Naive thymus-derived CD4-positive, alpha-beta T cell (primary cell): ENCODE measurements at regions of chr12 and their contacts with region 1.

Region 1: DNA sequence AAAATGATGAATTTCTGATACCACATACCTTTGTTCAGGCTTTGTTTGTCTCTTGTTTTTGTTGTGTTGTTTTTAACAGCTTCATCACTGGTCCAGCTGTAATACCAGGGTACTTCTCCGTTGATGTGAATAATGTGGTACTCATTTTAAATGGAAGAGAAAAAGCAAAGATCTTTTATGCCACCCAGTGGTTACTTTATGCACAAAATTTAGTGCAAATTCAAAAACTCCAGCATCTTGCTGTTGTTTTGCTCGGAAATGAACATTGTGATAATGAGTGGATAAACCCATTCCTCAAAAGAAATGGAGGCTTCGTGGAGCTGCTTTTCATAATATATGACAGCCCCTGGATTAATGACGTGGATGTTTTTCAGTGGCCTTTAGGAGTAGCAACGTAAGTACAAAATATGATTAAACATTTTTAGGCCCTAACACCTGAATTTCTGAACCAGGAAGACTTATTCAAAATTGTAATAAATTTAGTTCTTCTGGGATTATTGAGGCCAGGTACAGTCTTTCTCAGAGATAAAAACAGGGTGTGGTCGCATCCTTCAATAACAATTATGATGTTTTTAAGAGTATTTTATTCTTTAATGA is 22.4 kb downstream of the RXYLT1 start:
- DNase-seq: peak in 6 of 9 donors; percentile 3 to 34 (median 26)
- ATAC-seq: no peak
- H3K4me3 ChIP-seq: no peak overlapping the region
- H3K4me3 Mint-ChIP-seq: no peak overlapping the region
- H3K27ac ChIP-seq: no peak overlapping the region
- H3K27ac Mint-ChIP-seq: no peak overlapping the region
- H3K4me1 ChIP-seq: no peaks in the 10 kb centered on the region
- H3K4me1 Mint-ChIP-seq: peaks cover 0 to 4% (median 0%) of the 10 kb centered on the region in 7 donors
- H3K27me3 ChIP-seq: no peaks in the 10 kb centered on the region
- H3K27me3 Mint-ChIP-seq: no peaks in the 10 kb centered on the region

Region 2: DNA sequence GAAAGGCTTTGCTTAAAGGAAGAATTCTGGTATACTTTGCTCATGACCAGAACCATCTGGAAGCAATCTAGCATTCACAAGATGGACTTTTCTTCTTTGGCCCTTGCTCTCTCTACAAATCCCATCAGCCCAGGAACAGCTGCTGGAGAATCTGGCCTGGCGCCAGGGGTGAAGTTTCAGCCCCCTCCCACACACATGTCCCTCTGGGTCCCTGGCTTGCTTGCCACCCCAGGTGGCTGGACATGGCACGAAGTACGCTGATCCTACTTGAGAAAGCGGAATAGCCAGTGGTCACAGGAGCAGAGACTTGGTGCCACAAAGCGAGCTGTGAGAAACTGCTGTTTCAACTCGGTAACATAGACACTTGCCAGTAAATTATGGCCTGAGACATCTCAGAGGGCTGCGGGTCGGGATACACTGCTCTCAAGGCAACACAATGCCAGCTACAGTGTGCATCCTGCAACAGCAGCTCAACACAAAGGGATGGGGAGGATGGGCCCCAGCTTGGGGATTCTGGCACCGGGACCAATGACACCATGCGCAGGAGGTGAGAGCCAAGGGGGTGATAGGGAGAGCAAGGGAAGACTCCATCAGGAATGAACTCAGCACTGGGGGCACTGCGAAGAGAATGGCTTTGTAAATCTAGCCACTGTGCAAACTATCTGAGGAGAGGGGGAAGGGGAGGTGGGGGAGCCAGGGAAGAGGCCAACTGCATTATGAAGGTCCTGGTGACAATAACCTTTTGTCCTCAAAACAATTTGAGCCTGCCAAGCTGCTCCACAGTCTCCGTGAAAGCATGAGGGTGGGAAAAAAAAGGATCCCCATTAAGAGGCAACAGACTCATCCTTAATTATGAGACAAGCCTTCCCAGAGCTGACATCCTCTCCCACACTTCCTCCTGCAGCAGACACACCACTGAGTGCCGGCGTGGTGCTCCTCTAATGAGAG is 1087.1 kb before region 1 on chr12:
- CTCF ChIA-PET with region 1: no interaction called
- POLR2A ChIA-PET with region 1: no interaction called
- intact Hi-C with region 1: no loop called
- DNase-seq: no peak
- ATAC-seq: no peak
- H3K4me3 ChIP-seq: no peak overlapping the region
- H3K4me3 Mint-ChIP-seq: no peak overlapping the region
- H3K27ac ChIP-seq: no peak overlapping the region
- H3K27ac Mint-ChIP-seq: peak overlapping the region in 1 of 9 donors; percentile 63
- H3K4me1 ChIP-seq: no peaks in the 10 kb centered on the region
- H3K4me1 Mint-ChIP-seq: no peaks in the 10 kb centered on the region
- H3K27me3 ChIP-seq: no peaks in the 10 kb centered on the region
- H3K27me3 Mint-ChIP-seq: peaks cover 0 to 5% (median 0%) of the 10 kb centered on the region in 5 donors

Region 3: GRCh38 chr12:63668028-63668799 is 133.9 kb before region 1 on chr12 and contains the start of gene DPY19L2:
- CTCF ChIA-PET with region 1: no interaction called
- POLR2A ChIA-PET with region 1: no interaction called
- intact Hi-C with region 1: loop called in 1 of 2 experiments (anchors 1 kb)
- DNase-seq: peak in 8 of 9 donors; percentile 5 to 50 (median 27)
- ATAC-seq: peak; percentile 41
- H3K4me3 ChIP-seq: peak within 1 kb of the TSS; percentile 46
- H3K4me3 Mint-ChIP-seq: peak within 1 kb of the TSS; percentile 78 to 89 (median 84)
- H3K27ac ChIP-seq: peak within 1 kb of the TSS; percentile 35
- H3K27ac Mint-ChIP-seq: peak within 1 kb of the TSS in 4 of 9 donors; percentile 34 to 74 (median 54)
- H3K4me1 ChIP-seq: no peaks in the 10 kb centered on the region
- H3K4me1 Mint-ChIP-seq: peaks cover 8 to 26% (median 24%) of the 10 kb centered on the region in 7 donors
- H3K27me3 ChIP-seq: no peaks in the 10 kb centered on the region
- H3K27me3 Mint-ChIP-seq: peaks cover 19 to 53% (median 28%) of the 10 kb centered on the region in 5 donors
- total RNA-seq, gene DPY19L2: 0.34 to 3.1 (median 1.4) TPM